AG04449 (cell line): ENCODE measurements at regions of chr13 and their contacts with region 1.

Region 1: GRCh38 chr13:39051157-39051556 is 12.9 kb downstream of the NHLRC3 start:
- DNase-seq: peak; percentile 12
- H3K4me3 ChIP-seq: no peak overlapping the region
- CTCF ChIP-seq: peak; percentile 22

Region 2: GRCh38 chr13:38641164-38641951 is 409.8 kb before region 1 on chr13:
- CTCF ChIA-PET with region 1: no interaction called
- POLR2A ChIA-PET with region 1: no interaction called
- DNase-seq: no peak
- H3K4me3 ChIP-seq: no peak overlapping the region
- CTCF ChIP-seq: no peak

Region 3: GRCh38 chr13:39037880-39038568 is 13.1 kb before region 1 on chr13 and contains the starts of genes NHLRC3 and PROSER1:
- CTCF ChIA-PET with region 1: interaction called, 16 read pairs
- POLR2A ChIA-PET with region 1: interaction called, 3 read pairs
- DNase-seq: peak; percentile 53
- H3K4me3 ChIP-seq: peak within 1 kb of the TSS; percentile 91
- CTCF ChIP-seq: no peak